H1 (cell line): ENCODE measurements at regions of chr7 and their contacts with region 1.

Region 1: GRCh38 chr7:141737834-141738591 is at the start of gene SSBP1:
- DNase-seq: peak; percentile 89 to 90
- H3K4me3 ChIP-seq: peak within 1 kb of the TSS; percentile 70 to 100 (median 98)
- H3K27ac ChIP-seq: peak within 1 kb of the TSS; percentile 98
- H3K4me1 ChIP-seq: peaks cover 0 to 6% (median 2%) of the 10 kb centered on the region in 4 experiments; a peak in 3 of 7 replicates
- H3K27me3 ChIP-seq: no peaks in the 10 kb centered on the region
- CTCF ChIP-seq: peak; percentile 64 to 85 (median 77)
- EP300 ChIP-seq: peak; percentile 30 to 89
- POLR2A ChIP-seq: peak; percentile 93 to 98
- RAD21 ChIP-seq: peak; percentile 27 to 40; a peak in 2 of 4 replicates
- total RNA-seq, gene SSBP1: 254 and 259 TPM in 2 replicates

Region 2: GRCh38 chr7:141701489-141702046 is 36.4 kb before region 1 on chr7:
- CTCF ChIA-PET with region 1: interaction called, 3 read pairs
- POLR2A ChIA-PET with region 1: interaction called, 10 read pairs
- DNase-seq: peak in 1 of 2 experiments; percentile 75
- H3K4me3 ChIP-seq: peak overlapping the region; percentile 63 to 73 (median 68)
- H3K27ac ChIP-seq: no peak overlapping the region
- H3K4me1 ChIP-seq: peaks cover 0 to 16% (median 10%) of the 10 kb centered on the region in 4 experiments; a peak in 6 of 7 replicates
- H3K27me3 ChIP-seq: peaks cover 0 to 8% (median 5%) of the 10 kb centered on the region in 4 experiments; a peak in 3 of 7 replicates
- CTCF ChIP-seq: no peak
- EP300 ChIP-seq: no peak
- POLR2A ChIP-seq: peak in 1 of 2 experiments; percentile 22; a peak in 1 of 3 replicates
- RAD21 ChIP-seq: no peak

Region 3: DNA sequence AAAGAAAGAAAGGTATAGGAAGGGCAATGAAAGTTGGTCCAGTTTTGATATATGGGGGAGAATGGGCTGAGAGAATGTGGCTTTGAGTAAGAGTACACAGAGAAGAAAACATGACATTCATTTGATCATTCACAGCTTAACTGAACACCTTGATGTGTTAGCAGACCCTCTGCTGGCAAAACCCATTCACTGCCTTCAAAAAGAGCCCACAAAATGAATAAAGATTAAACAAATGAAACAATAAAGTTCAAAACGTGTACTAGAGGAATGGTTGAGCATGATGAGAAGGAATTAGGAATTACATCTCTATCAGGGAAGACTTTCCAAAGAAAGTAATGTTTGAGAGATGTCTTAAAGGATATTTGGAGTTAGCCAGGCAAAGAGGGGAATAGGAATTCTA is 27.7 kb before region 1 on chr7:
- CTCF ChIA-PET with region 1: interaction called, 13 read pairs
- POLR2A ChIA-PET with region 1: interaction called, 21 read pairs
- DNase-seq: no peak
- H3K4me3 ChIP-seq: no peak overlapping the region
- H3K27ac ChIP-seq: no peak overlapping the region
- H3K4me1 ChIP-seq: peaks cover 0 to 8% (median 0%) of the 10 kb centered on the region in 4 experiments; a peak in 1 of 7 replicates
- H3K27me3 ChIP-seq: no peaks in the 10 kb centered on the region
- CTCF ChIP-seq: no peak
- EP300 ChIP-seq: no peak
- POLR2A ChIP-seq: no peak
- RAD21 ChIP-seq: no peak

Region 4: GRCh38 chr7:141715794-141716689 is 22.0 kb before region 1 on chr7:
- CTCF ChIA-PET with region 1: interaction called, 16 read pairs
- POLR2A ChIA-PET with region 1: interaction called, 21 read pairs
- DNase-seq: no peak
- H3K4me3 ChIP-seq: peak overlapping the region in 1 of 4 experiments; percentile 33; a peak in 2 of 8 replicates
- H3K27ac ChIP-seq: no peak overlapping the region
- H3K4me1 ChIP-seq: peaks cover 0 to 7% (median 0%) of the 10 kb centered on the region in 4 experiments; a peak in 1 of 7 replicates
- H3K27me3 ChIP-seq: no peaks in the 10 kb centered on the region
- CTCF ChIP-seq: no peak
- EP300 ChIP-seq: no peak
- POLR2A ChIP-seq: no peak
- RAD21 ChIP-seq: no peak

Region 5: DNA sequence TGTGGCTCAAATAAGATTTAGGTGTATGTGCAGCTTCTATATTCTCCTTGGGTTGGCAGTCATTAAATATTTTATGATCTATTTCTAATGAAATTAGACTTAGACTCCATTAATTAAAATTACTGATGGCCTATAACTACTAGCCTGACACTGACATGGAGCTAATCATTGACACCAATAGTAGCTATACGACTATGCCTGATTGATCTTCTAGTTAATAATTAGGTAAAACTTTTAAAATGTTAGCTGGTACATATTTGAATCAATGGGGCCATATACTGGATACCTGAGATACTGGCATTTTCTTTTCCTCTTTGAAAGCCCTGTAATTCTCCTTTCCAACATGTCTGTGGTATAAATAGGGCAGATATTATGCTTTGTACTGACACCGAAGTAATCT is 15.5 kb before region 1 on chr7:
- CTCF ChIA-PET with region 1: interaction called, 16 read pairs
- POLR2A ChIA-PET with region 1: interaction called, 8 read pairs
- DNase-seq: no peak
- H3K4me3 ChIP-seq: no peak overlapping the region
- H3K27ac ChIP-seq: no peak overlapping the region
- H3K4me1 ChIP-seq: no peaks in the 10 kb centered on the region
- H3K27me3 ChIP-seq: no peaks in the 10 kb centered on the region; a peak in 1 of 7 replicates
- CTCF ChIP-seq: no peak
- EP300 ChIP-seq: no peak
- POLR2A ChIP-seq: no peak
- RAD21 ChIP-seq: no peak

Region 6: DNA sequence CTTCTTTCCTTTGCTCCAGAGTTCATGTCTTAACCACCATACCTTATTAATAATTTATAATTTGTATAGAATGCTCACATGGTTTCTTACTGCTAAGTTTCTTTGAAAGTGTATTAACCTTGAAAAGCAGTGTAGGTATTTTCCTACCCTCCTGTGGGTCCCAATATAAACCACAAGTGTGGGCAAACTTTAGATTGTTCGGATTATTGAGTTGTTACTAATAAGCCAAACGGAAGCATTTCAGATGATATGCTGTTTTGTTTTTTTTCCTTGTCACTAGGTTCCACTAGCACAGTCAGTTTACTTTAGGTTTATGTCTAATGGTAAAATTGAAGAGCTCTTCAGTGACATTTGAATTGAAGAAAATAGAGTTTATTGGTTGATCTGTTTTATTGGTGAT is 10.4 kb after region 1 on chr7:
- CTCF ChIA-PET with region 1: interaction called, 9 read pairs
- POLR2A ChIA-PET with region 1: interaction called, 15 read pairs
- DNase-seq: no peak
- H3K4me3 ChIP-seq: no peak overlapping the region
- H3K27ac ChIP-seq: no peak overlapping the region
- H3K4me1 ChIP-seq: no peaks in the 10 kb centered on the region
- H3K27me3 ChIP-seq: no peaks in the 10 kb centered on the region
- CTCF ChIP-seq: no peak
- EP300 ChIP-seq: no peak
- POLR2A ChIP-seq: no peak
- RAD21 ChIP-seq: no peak

Region 7: GRCh38 chr7:141928845-141929195 is 190.8 kb after region 1 on chr7:
- CTCF ChIA-PET with region 1: no interaction called
- POLR2A ChIA-PET with region 1: no interaction called
- DNase-seq: no peak
- H3K4me3 ChIP-seq: no peak overlapping the region
- H3K27ac ChIP-seq: no peak overlapping the region
- H3K4me1 ChIP-seq: peaks cover 0 to 3% (median 1%) of the 10 kb centered on the region in 4 experiments; a peak in 2 of 7 replicates
- H3K27me3 ChIP-seq: no peaks in the 10 kb centered on the region
- CTCF ChIP-seq: no peak
- EP300 ChIP-seq: no peak
- POLR2A ChIP-seq: no peak
- RAD21 ChIP-seq: no peak